ENCODE measurements at regions of chr10 and their contacts with region 1.

Region 1: GRCh38 chr10:96910488-96911395 is 78.6 kb downstream of the LCOR start:
- DNase-seq: peak in 5 of 9 donors; percentile 15 to 36 (median 29)
- ATAC-seq: peak; percentile 80
- H3K4me3 ChIP-seq: no peak overlapping the region
- H3K4me3 Mint-ChIP-seq: no peak overlapping the region
- H3K27ac ChIP-seq: no peak overlapping the region
- H3K27ac Mint-ChIP-seq: peak overlapping the region in 1 of 9 donors; percentile 4
- H3K4me1 ChIP-seq: peaks cover 3 to 4% of the 10 kb centered on the region in 2 donors
- H3K4me1 Mint-ChIP-seq: peaks cover 3 to 51% (median 33%) of the 10 kb centered on the region in 7 donors
- H3K27me3 ChIP-seq: no peaks in the 10 kb centered on the region
- H3K27me3 Mint-ChIP-seq: no peaks in the 10 kb centered on the region

Region 2: GRCh38 chr10:96896884-96897589 is 13.7 kb before region 1 on chr10:
- CTCF ChIA-PET with region 1: no interaction called
- POLR2A ChIA-PET with region 1: no interaction called
- intact Hi-C with region 1: loop called in 1 of 2 experiments (anchors 2 kb)
- DNase-seq: no peak
- ATAC-seq: no peak
- H3K4me3 ChIP-seq: no peak overlapping the region
- H3K4me3 Mint-ChIP-seq: peak overlapping the region in 4 of 10 donors; percentile 12 to 23 (median 14)
- H3K27ac ChIP-seq: no peak overlapping the region
- H3K27ac Mint-ChIP-seq: peak overlapping the region in 2 of 9 donors; percentile 38 to 44
- H3K4me1 ChIP-seq: peaks cover 0 to under 1% of the 10 kb centered on the region in 2 donors
- H3K4me1 Mint-ChIP-seq: peaks cover 11 to 78% (median 68%) of the 10 kb centered on the region in 7 donors
- H3K27me3 ChIP-seq: no peaks in the 10 kb centered on the region
- H3K27me3 Mint-ChIP-seq: no peaks in the 10 kb centered on the region

Region 3: DNA sequence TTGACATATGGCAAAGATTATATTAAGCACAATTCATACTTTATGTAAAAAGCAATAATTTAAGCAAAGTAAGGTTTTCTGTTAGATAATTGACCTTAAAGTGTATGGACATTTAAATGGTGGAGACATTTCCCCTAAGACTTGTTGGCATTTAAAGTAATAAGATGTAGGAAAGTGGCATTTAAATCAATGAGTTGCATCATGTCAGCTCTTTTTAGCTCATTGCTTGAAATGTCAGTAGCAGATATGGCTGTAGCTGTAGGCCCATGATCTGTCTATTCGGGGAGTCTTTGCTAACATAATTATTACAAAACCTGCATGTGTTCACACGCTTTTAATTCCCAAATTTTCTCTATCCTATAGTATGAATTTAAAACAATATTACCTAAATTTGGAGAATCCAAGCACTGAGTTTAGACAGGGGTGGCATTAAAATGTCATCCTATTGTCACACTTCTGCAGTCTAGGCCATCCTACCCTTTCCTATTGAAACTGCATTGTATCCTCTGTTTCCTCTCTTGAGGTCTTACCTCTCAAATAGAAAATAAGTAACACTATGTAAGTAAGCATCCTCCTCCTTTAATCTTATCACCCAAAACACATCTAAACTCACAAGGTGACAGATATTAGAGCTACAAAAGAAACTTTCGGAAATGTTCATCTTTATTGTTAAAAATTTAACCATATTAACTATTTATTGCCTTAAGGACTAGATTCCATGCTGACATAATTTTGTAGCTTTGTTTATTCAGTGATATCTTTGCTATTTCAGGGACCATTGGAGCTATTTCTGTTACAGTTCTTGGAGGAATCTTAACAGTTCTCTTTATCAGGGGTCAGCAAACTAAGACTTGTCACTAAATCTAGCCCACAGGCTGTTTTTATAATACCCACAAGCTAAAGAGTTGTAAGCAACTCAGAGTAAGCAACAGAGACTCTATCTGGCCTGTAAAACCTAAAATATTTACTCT is 12.5 kb after region 1 on chr10:
- CTCF ChIA-PET with region 1: interaction called, 3 read pairs
- POLR2A ChIA-PET with region 1: no interaction called
- intact Hi-C with region 1: loop called in 1 of 2 experiments (anchors 2 kb)
- DNase-seq: no peak
- ATAC-seq: no peak
- H3K4me3 ChIP-seq: no peak overlapping the region
- H3K4me3 Mint-ChIP-seq: no peak overlapping the region
- H3K27ac ChIP-seq: no peak overlapping the region
- H3K27ac Mint-ChIP-seq: no peak overlapping the region
- H3K4me1 ChIP-seq: no peaks in the 10 kb centered on the region
- H3K4me1 Mint-ChIP-seq: peaks cover 6 to 44% (median 25%) of the 10 kb centered on the region in 7 donors
- H3K27me3 ChIP-seq: no peaks in the 10 kb centered on the region
- H3K27me3 Mint-ChIP-seq: no peaks in the 10 kb centered on the region

Region 4: DNA sequence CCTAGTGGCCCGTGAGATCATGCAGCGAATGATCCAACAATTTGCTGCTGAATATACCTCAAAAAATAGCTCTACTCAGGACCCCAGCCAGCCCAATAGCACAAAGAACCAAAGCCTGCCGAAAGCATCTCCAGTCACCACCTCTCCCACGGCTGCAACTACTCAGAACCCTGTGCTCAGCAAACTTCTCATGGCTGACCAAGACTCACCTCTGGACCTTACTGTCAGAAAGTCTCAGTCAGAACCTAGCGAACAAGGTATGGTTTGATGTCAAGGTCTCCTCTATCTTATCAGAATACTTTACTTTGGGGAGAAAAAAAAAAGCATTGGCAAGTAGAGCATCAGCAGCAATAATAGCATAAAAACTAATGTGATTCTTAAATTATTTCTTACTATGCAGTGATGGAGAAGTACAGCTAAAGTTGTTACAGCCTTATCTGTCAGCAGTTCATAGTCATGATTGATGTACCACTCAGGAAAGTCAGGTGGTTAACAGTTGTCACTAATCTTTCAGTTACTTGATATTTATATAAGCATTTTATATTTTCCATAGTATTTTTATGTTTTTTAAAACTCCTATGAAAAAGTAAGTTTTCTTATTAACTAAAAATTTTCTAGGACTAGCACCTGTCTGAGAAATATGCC is 38.4 kb after region 1 on chr10:
- CTCF ChIA-PET with region 1: no interaction called
- POLR2A ChIA-PET with region 1: no interaction called
- intact Hi-C with region 1: loop called in 1 of 2 experiments (anchors 1 kb)
- DNase-seq: no peak
- ATAC-seq: no peak
- H3K4me3 ChIP-seq: no peak overlapping the region
- H3K4me3 Mint-ChIP-seq: peak overlapping the region in 1 of 10 donors; percentile 47
- H3K27ac ChIP-seq: no peak overlapping the region
- H3K27ac Mint-ChIP-seq: peak overlapping the region in 2 of 9 donors; percentile 36 to 53
- H3K4me1 ChIP-seq: peaks cover 0 to 6% of the 10 kb centered on the region in 2 donors
- H3K4me1 Mint-ChIP-seq: peaks cover 5 to 51% (median 37%) of the 10 kb centered on the region in 7 donors
- H3K27me3 ChIP-seq: no peaks in the 10 kb centered on the region
- H3K27me3 Mint-ChIP-seq: no peaks in the 10 kb centered on the region

Measured in naive thymus-derived CD4-positive, alpha-beta T cell (primary cell).